ENCODE measurements at regions of chr9 and their contacts with region 1.

Region 1: DNA sequence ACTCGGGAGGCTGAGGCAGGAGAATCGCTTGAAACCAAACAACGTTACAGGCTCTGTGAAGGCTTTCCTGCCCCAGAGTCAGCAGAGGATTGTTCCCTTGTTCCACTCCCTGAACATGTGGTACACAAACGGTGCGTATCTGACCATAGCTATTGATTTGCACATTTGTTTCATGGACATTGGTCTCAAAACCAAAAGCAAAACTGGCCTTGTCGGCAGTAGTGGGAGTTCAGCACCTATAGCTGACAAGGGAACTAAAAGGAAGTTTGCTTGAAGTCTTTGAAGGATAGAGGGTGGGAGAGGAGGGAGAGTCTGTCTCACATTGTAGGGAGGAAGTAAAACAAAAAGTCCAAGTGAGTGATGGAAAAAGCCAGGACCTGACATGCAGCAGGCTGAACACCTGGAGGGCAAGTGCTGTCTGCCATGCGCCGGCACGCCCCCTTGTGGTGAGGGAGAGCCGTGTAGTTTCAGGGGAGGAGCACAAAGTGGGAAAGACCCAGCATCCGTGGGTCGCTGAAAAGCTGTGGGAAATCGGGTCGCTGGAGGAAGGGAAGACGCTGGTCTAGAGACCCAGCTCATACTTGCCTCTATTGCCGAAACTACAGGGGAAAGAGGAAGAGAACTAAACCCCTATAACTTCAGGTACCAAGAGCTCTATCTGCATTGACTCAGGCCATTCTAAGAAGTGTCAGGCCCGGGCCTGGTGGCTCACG is 58.0 kb downstream of the RAD23B start:
- DNase-seq: peak; percentile 71 to 75 (median 73)
- H3K4me3 ChIP-seq: no peak overlapping the region
- H3K4me3 Mint-ChIP-seq: peak overlapping the region in 2 of 8 donors; percentile 4 to 17
- H3K27ac ChIP-seq: no peak overlapping the region
- H3K27ac Mint-ChIP-seq: peak overlapping the region in 4 of 7 donors; percentile 30 to 89 (median 50)
- H3K4me1 ChIP-seq: peaks cover 10% of the 10 kb centered on the region
- H3K4me1 Mint-ChIP-seq: peaks cover 7 to 17% (median 14%) of the 10 kb centered on the region in 4 donors
- H3K27me3 ChIP-seq: no peaks in the 10 kb centered on the region
- H3K27me3 Mint-ChIP-seq: no peaks in the 10 kb centered on the region

Region 2: DNA sequence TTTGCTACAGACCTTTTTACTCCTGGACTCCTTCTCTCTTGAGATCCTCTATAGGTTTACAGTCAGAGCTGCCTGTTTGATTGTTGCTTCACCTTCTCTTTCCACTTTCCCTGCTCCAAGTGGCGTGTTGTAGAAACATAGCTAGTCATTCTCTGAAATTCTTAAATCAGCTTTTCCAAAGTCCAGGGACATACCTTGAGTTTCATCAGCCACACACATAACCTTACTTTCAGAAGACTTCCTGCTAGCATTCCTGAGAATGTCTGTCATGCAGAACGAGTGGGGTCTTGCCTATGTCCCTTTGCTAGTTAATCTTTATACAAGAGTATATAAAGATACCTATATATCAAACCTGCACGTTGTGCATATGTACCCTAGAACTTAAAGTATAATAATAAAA is 708.5 kb before region 1 on chr9:
- CTCF ChIA-PET with region 1: no interaction called
- POLR2A ChIA-PET with region 1: no interaction called
- intact Hi-C with region 1: no loop called
- DNase-seq: no peak
- H3K4me3 ChIP-seq: no peak overlapping the region
- H3K4me3 Mint-ChIP-seq: no peak overlapping the region
- H3K27ac ChIP-seq: no peak overlapping the region
- H3K27ac Mint-ChIP-seq: no peak overlapping the region
- H3K4me1 ChIP-seq: no peaks in the 10 kb centered on the region
- H3K4me1 Mint-ChIP-seq: no peaks in the 10 kb centered on the region
- H3K27me3 ChIP-seq: no peaks in the 10 kb centered on the region
- H3K27me3 Mint-ChIP-seq: no peaks in the 10 kb centered on the region

Region 3: GRCh38 chr9:107137495-107138202 is 203.4 kb before region 1 on chr9:
- CTCF ChIA-PET with region 1: interaction called, 38 read pairs
- POLR2A ChIA-PET with region 1: no interaction called
- intact Hi-C with region 1: no loop called
- DNase-seq: peak in 1 of 5 donors; percentile 3
- H3K4me3 ChIP-seq: no peak overlapping the region
- H3K4me3 Mint-ChIP-seq: no peak overlapping the region
- H3K27ac ChIP-seq: no peak overlapping the region
- H3K27ac Mint-ChIP-seq: no peak overlapping the region
- H3K4me1 ChIP-seq: no peaks in the 10 kb centered on the region
- H3K4me1 Mint-ChIP-seq: peaks cover 0 to 3% (median 0%) of the 10 kb centered on the region in 4 donors
- H3K27me3 ChIP-seq: no peaks in the 10 kb centered on the region
- H3K27me3 Mint-ChIP-seq: peaks cover 3 to 8% of the 10 kb centered on the region in 2 donors

Region 4: GRCh38 chr9:107172160-107172978 is 168.7 kb before region 1 on chr9:
- CTCF ChIA-PET with region 1: interaction called, 11 read pairs
- POLR2A ChIA-PET with region 1: no interaction called
- intact Hi-C with region 1: no loop called
- DNase-seq: peak; percentile 21 to 52 (median 35)
- H3K4me3 ChIP-seq: no peak overlapping the region
- H3K4me3 Mint-ChIP-seq: no peak overlapping the region
- H3K27ac ChIP-seq: no peak overlapping the region
- H3K27ac Mint-ChIP-seq: no peak overlapping the region
- H3K4me1 ChIP-seq: no peaks in the 10 kb centered on the region
- H3K4me1 Mint-ChIP-seq: peaks cover 0 to 2% (median under 1%) of the 10 kb centered on the region in 4 donors
- H3K27me3 ChIP-seq: no peaks in the 10 kb centered on the region
- H3K27me3 Mint-ChIP-seq: peaks cover 1 to 11% of the 10 kb centered on the region in 2 donors

Region 5: GRCh38 chr9:107239474-107239873 is 101.6 kb before region 1 on chr9:
- CTCF ChIA-PET with region 1: interaction called, 210 read pairs
- POLR2A ChIA-PET with region 1: interaction called, 3 read pairs
- intact Hi-C with region 1: loop called (anchors 1 kb)
- DNase-seq: peak in 3 of 5 donors; percentile 13 to 25 (median 19)
- H3K4me3 ChIP-seq: no peak overlapping the region
- H3K4me3 Mint-ChIP-seq: no peak overlapping the region
- H3K27ac ChIP-seq: no peak overlapping the region
- H3K27ac Mint-ChIP-seq: no peak overlapping the region
- H3K4me1 ChIP-seq: peaks cover 4% of the 10 kb centered on the region
- H3K4me1 Mint-ChIP-seq: peaks cover 4 to 9% (median 7%) of the 10 kb centered on the region in 4 donors
- H3K27me3 ChIP-seq: no peaks in the 10 kb centered on the region
- H3K27me3 Mint-ChIP-seq: peaks cover 2 to 3% of the 10 kb centered on the region in 2 donors

Region 6: GRCh38 chr9:107282753-107283625 is 58.1 kb before region 1 on chr9 and contains the start of gene RAD23B:
- CTCF ChIA-PET with region 1: interaction called, 10 read pairs
- POLR2A ChIA-PET with region 1: interaction called, 3 read pairs
- intact Hi-C with region 1: loop called (anchors 1 kb)
- DNase-seq: peak; percentile 96 to 100 (median 99)
- H3K4me3 ChIP-seq: peak within 1 kb of the TSS; percentile 85 to 89
- H3K4me3 Mint-ChIP-seq: peak within 1 kb of the TSS; percentile 94 to 100 (median 98)
- H3K27ac ChIP-seq: peak within 1 kb of the TSS; percentile 91
- H3K27ac Mint-ChIP-seq: peak within 1 kb of the TSS; percentile 92 to 98 (median 95)
- H3K4me1 ChIP-seq: peaks cover 44% of the 10 kb centered on the region
- H3K4me1 Mint-ChIP-seq: peaks cover 25 to 55% (median 36%) of the 10 kb centered on the region in 4 donors
- H3K27me3 ChIP-seq: no peaks in the 10 kb centered on the region
- H3K27me3 Mint-ChIP-seq: no peaks in the 10 kb centered on the region
- total RNA-seq, gene RAD23B: 49.5 to 54.2 TPM

Region 7: DNA sequence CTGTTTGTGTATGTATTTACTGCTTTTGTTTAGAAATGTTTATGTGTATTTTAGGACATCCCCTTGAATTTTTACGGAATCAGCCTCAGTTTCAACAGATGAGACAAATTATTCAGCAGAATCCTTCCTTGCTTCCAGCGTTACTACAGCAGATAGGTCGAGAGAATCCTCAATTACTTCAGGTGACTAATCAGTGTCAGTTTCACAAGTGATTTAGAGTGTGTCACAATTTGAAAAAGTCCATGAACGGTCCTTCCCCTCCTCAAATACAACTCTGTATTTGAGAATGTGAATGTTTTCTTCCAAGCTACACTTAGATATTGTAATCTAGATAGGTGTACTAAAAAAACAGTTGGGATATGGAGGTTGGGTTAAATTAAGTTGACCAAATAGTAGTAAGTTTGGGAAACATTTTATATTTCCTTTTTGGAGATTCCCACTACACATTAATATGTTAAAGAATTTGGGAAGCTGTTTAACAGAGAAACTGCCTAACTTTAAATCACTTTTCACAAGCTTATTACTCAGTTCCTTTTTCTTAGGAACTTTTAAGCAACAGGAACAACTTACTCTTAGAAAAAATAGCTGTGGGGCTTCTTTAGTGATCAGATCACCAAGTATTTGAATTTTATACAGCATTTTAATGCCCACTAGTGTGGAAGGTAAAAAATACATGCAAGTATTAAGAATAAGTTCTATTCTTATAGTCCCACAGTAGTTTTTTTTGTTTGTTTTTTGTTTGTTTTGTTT is 17.1 kb before region 1 on chr9:
- CTCF ChIA-PET with region 1: interaction called, 12 read pairs
- POLR2A ChIA-PET with region 1: no interaction called
- intact Hi-C with region 1: no loop called
- DNase-seq: no peak
- H3K4me3 ChIP-seq: no peak overlapping the region
- H3K4me3 Mint-ChIP-seq: no peak overlapping the region
- H3K27ac ChIP-seq: no peak overlapping the region
- H3K27ac Mint-ChIP-seq: peak overlapping the region in 2 of 7 donors; percentile 9 to 67
- H3K4me1 ChIP-seq: no peaks in the 10 kb centered on the region
- H3K4me1 Mint-ChIP-seq: peaks cover 5 to 14% (median 10%) of the 10 kb centered on the region in 4 donors
- H3K27me3 ChIP-seq: no peaks in the 10 kb centered on the region
- H3K27me3 Mint-ChIP-seq: no peaks in the 10 kb centered on the region

Region 8: GRCh38 chr9:107363516-107364152 is 22.6 kb after region 1 on chr9:
- CTCF ChIA-PET with region 1: interaction called, 13 read pairs
- POLR2A ChIA-PET with region 1: no interaction called
- intact Hi-C with region 1: no loop called
- DNase-seq: no peak
- H3K4me3 ChIP-seq: no peak overlapping the region
- H3K4me3 Mint-ChIP-seq: no peak overlapping the region
- H3K27ac ChIP-seq: no peak overlapping the region
- H3K27ac Mint-ChIP-seq: no peak overlapping the region
- H3K4me1 ChIP-seq: no peaks in the 10 kb centered on the region
- H3K4me1 Mint-ChIP-seq: no peaks in the 10 kb centered on the region
- H3K27me3 ChIP-seq: no peaks in the 10 kb centered on the region
- H3K27me3 Mint-ChIP-seq: peaks cover 3 to 9% of the 10 kb centered on the region in 2 donors

Region 9: GRCh38 chr9:107615321-107615720 is 274.2 kb after region 1 on chr9:
- CTCF ChIA-PET with region 1: no interaction called
- POLR2A ChIA-PET with region 1: no interaction called
- intact Hi-C with region 1: no loop called
- DNase-seq: no peak
- H3K4me3 ChIP-seq: no peak overlapping the region
- H3K4me3 Mint-ChIP-seq: no peak overlapping the region
- H3K27ac ChIP-seq: no peak overlapping the region
- H3K27ac Mint-ChIP-seq: no peak overlapping the region
- H3K4me1 ChIP-seq: no peaks in the 10 kb centered on the region
- H3K4me1 Mint-ChIP-seq: no peaks in the 10 kb centered on the region
- H3K27me3 ChIP-seq: no peaks in the 10 kb centered on the region
- H3K27me3 Mint-ChIP-seq: peaks cover 0 to 3% of the 10 kb centered on the region in 2 donors